PC-9 (cell line): ENCODE measurements at regions of chr7 and their contacts with region 1.

Region 1: DNA sequence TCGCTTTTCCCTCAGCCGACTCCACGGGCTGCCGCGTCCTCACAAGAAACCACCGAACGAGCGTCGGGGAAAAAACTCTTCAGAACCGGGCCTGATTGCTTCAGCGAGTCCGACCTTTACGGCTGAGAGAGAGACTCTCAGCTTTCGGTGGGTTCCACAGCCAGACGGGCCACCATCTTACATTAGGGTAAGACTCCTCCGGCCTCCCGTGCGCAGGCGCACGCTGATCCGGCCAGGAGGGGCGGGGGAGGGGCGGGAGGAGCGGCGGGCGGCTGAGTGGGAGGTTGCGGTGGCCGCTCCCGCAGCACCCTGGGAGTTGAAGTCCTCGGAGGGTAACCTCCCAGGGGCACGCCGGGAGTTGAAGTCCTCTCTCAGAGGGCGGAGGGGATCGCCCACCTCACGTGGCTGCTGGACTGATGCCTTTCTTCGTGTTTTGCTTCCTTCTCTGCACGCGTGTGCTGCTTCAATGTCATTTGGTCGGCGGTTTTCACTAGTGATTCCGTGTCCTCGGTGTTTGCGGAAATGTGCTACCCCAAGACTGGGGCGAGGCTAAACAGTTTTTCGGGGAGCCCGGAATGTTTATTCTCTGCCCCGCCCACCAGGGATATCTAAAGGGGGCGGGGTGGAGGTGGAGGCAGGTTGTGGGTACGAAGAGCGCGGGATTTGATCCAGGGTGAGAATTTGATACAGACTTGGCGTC is at the start of gene CNOT4:
- DNase-seq: peak; percentile 94 to 97
- H3K4me3 ChIP-seq: peak within 1 kb of the TSS; percentile 78
- H3K27ac ChIP-seq: peak within 1 kb of the TSS; percentile 77
- H3K4me1 ChIP-seq: peaks cover 27% of the 10 kb centered on the region
- H3K27me3 ChIP-seq: no peaks in the 10 kb centered on the region
- CTCF ChIP-seq: no peak
- total RNA-seq, gene CNOT4: 22.8 and 25.8 TPM in 2 replicates

Region 2: DNA sequence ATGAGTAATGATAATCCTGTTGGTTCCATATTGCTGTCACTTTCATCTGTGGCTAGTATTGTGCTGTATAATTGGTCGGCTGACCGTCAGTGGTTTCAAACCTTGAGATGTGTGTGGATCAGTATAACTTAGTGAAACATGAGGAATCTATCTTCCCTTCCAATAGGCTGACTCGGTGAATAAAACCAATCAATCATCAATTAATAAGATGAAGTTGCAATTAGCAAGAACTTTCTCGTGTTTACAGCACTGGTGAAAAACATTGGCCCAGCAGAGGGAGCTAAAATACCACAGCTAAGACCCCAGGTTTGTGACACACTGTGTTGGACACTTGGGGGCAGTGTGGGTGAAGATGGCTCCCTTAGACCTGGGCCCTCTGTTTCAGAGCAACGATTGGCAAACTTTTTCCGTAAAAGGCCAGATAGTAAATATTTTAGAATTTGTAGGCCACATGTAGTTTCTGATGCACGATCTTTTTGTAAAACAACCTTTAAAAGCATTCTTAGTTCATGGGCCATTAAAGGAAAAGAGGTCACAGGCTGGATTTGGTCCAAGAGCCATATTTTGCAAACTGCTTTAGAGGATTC is 228.6 kb before region 1 on chr7:
- CTCF ChIA-PET with region 1: no interaction called
- POLR2A ChIA-PET with region 1: no interaction called
- intact Hi-C with region 1: loop called (anchors 2 kb)
- DNase-seq: peak; percentile 49 to 76
- H3K4me3 ChIP-seq: no peak overlapping the region
- H3K27ac ChIP-seq: no peak overlapping the region
- H3K4me1 ChIP-seq: no peaks in the 10 kb centered on the region
- H3K27me3 ChIP-seq: no peaks in the 10 kb centered on the region
- CTCF ChIP-seq: peak; percentile 99

Region 3: GRCh38 chr7:135392701-135393100 is 117.4 kb before region 1 on chr7:
- CTCF ChIA-PET with region 1: no interaction called
- POLR2A ChIA-PET with region 1: no interaction called
- intact Hi-C with region 1: no loop called
- DNase-seq: no peak
- H3K4me3 ChIP-seq: no peak overlapping the region
- H3K27ac ChIP-seq: no peak overlapping the region
- H3K4me1 ChIP-seq: no peaks in the 10 kb centered on the region
- H3K27me3 ChIP-seq: no peaks in the 10 kb centered on the region
- CTCF ChIP-seq: no peak

Region 4: GRCh38 chr7:135414850-135415439 is 95.1 kb before region 1 on chr7:
- CTCF ChIA-PET with region 1: interaction called, 7 read pairs
- POLR2A ChIA-PET with region 1: interaction called, 4 read pairs
- intact Hi-C with region 1: loop called (anchors 5 kb)
- DNase-seq: peak; percentile 29 to 61
- H3K4me3 ChIP-seq: no peak overlapping the region
- H3K27ac ChIP-seq: no peak overlapping the region
- H3K4me1 ChIP-seq: no peaks in the 10 kb centered on the region
- H3K27me3 ChIP-seq: no peaks in the 10 kb centered on the region
- CTCF ChIP-seq: peak; percentile 79

Region 5: DNA sequence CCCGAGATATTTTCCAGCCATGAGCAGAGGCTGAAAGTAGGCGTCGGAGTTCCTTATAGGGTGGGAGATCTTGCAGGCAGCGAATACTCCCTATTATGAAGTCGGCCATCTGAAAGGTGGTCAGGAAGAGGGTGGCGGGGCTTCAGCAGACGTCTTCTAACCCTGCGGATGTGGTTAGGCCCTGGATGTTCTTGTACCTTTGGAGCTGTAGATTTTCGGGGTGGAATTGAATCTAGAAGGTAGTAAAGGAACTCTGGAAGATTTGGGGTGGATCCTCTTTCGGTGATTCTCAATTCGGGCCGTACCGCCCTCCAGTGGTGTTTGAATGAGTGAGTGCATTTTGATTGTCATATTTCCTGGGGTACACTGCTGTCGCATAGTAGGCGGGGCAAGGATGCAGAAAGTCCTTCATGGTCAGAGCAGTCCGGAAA is 48.3 kb after region 1 on chr7:
- CTCF ChIA-PET with region 1: no interaction called
- POLR2A ChIA-PET with region 1: no interaction called
- intact Hi-C with region 1: loop called (anchors 1 kb)
- DNase-seq: peak; percentile 70
- H3K4me3 ChIP-seq: peak overlapping the region; percentile 85
- H3K27ac ChIP-seq: peak overlapping the region; percentile 91
- H3K4me1 ChIP-seq: peaks cover 6% of the 10 kb centered on the region
- H3K27me3 ChIP-seq: no peaks in the 10 kb centered on the region
- CTCF ChIP-seq: peak; percentile 70

Region 6: DNA sequence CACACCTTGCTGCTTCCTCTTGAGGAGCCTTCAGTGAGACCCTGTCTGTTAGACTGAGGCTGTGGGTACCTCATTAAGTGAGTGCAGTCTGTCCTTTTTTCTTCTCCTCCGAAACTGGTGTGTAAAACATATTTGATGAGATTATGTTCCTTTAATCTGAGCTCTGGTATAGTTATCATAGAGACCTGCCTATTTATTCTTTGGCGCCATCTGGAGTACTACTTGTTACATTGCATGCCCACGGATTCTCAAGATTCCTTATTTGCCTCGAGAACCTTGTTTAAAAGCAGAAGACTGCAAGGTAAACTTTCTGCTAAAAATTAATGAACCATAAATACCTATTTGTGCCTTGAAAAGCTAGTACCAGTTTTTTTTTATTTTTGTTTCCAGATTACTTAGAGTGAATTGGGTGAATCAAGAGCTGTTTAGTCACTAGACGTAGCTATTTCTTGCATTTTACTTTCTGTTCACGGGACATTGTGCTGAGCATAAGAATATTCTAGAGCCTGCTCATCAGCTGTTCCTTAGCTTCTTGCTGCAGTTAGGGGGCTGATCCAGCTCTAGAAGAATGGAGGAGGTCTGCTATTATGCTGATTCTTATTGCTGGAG is 135.3 kb after region 1 on chr7:
- CTCF ChIA-PET with region 1: no interaction called
- POLR2A ChIA-PET with region 1: no interaction called
- intact Hi-C with region 1: loop called (anchors 2 kb)
- DNase-seq: no peak
- H3K4me3 ChIP-seq: no peak overlapping the region
- H3K27ac ChIP-seq: no peak overlapping the region
- H3K4me1 ChIP-seq: no peaks in the 10 kb centered on the region
- H3K27me3 ChIP-seq: no peaks in the 10 kb centered on the region
- CTCF ChIP-seq: peak; percentile 77